Left cardiac atrium (tissue), 4 donors: ENCODE measurements at regions of chr1 and their contacts with region 1.

Region 1: DNA sequence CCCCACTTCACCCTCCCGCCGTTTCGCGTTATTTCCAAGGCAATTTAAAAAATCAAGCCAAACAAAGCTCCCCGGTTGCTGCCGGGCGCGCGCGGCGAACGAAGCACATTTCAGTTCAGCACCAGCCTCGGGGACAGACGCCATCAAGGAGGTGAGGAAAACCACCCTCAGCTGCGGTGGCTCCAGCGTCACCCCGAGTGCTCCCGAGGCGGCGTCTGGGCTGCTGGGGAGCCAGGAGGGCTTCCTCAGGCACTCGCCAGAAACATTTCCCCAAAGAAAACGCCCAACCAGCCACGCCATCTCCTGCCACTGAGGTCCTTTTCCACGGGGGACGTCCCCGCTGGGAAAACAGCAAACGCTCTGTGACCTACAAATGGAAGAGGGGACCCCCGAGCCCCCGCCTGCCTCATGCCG is 623 bp downstream of the GNG4 start:
- DNase-seq: peak; percentile 62
- ATAC-seq: peak; percentile 82 to 92

Region 2: DNA sequence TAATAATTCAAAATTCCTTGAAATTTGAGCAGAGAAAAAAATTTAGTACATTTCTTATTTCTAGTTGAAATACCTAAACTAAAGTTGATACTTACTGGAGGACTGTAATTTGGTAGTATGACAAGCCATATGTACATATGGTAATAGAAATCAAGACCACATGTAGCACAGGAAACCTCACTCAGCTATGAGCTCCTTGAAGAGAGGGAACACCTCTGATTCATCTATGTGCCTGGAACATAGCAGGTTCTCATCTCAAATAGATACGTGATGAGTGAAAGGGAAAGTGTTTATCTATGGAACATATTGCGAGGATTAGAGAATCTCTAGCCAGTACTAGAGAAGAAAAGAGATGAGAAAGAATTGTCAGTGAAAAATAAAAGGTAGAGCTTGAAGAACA is 48.5 kb after region 1 on chr1:
- intact Hi-C with region 1: loop called in 1 of 2 experiments (anchors 5 kb)
- DNase-seq: no peak
- ATAC-seq: no peak